Activated CD8-positive, alpha-beta memory T cell treated with anti-CD3 and anti-CD28 coated beads, Interleukin-2, amount 10 ng/mL, durations not matched to agents 7 days and 5 days (primary cell): ENCODE measurements at regions of chr16 and their contacts with region 1.

Region 1: DNA sequence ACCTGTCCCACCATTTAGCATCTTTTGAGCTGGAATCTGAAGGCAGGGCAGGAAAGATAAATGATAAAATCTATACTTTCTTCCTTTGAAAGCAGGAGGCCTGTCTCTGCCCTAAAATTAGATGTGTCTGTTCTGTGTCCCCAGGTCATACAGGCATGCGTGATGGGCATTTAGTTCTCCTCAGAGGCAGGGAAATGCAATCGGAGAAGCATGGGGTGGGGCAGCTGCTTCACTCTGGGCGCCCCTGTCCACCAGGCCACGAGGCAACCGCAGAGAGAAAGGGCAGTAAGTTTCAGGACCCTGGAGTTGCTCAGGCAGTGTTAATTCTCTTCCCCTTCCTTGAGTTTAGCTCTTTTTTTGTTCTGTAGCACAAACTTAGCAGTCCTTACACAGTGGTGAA is 25.1 kb downstream of the CLUAP1 start:
- DNase-seq: no peak
- ATAC-seq: no peak
- H3K4me3 Mint-ChIP-seq: no peak overlapping the region
- H3K27ac Mint-ChIP-seq: no peak overlapping the region
- H3K4me1 Mint-ChIP-seq: peaks cover 14% of the 10 kb centered on the region
- H3K27me3 Mint-ChIP-seq: no peaks in the 10 kb centered on the region

Region 2: DNA sequence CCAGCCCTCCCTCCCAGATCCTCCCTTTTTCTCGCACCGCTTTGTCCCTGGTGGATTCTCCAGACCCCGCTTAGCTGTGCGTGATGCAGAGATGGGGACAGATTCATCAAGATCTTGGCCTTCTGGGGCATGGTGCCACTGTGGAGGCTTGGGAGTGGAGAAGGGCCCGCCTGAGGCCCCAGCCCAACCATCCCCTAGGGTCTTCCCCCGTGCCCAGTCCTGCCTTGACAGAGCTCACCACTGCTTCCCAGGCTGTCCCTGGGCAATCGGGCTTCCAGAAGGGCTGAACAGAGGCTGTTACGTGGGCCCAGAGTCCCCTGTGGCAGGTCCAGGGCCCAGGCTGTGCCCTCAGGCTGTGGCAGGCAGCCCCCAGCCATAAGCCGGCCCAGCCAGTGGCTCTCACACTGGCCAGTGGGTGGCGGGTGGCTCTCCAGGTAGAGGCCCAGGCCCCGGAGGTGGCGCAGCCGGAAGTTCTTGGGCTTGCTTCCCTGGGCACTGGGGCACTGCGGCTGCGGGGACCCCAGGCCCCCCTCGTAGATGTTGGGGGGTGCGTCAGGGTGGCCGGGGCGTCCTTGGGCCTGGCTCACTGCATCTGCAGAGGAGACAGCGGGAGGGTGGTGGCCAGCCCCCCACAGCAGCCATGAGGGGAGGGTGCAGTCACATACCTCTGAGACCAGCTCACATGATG is 31.5 kb before region 1 on chr16:
- CTCF ChIA-PET with region 1: no interaction called
- DNase-seq: no peak
- ATAC-seq: no peak
- H3K4me3 Mint-ChIP-seq: no peak overlapping the region
- H3K27ac Mint-ChIP-seq: no peak overlapping the region
- H3K4me1 Mint-ChIP-seq: peaks cover under 1% of the 10 kb centered on the region
- H3K27me3 Mint-ChIP-seq: peaks cover under 1% of the 10 kb centered on the region

Region 3: GRCh38 chr16:3509470-3509928 is 16.5 kb before region 1 on chr16:
- CTCF ChIA-PET with region 1: interaction called, 13 read pairs
- DNase-seq: peak; percentile 93
- ATAC-seq: peak; percentile 96
- H3K4me3 Mint-ChIP-seq: peak overlapping the region; percentile 25
- H3K27ac Mint-ChIP-seq: peak overlapping the region; percentile 92
- H3K4me1 Mint-ChIP-seq: peaks cover 70% of the 10 kb centered on the region
- H3K27me3 Mint-ChIP-seq: no peaks in the 10 kb centered on the region

Region 4: GRCh38 chr16:3514621-3515020 is 11.3 kb before region 1 on chr16:
- CTCF ChIA-PET with region 1: interaction called, 13 read pairs
- DNase-seq: no peak
- ATAC-seq: no peak
- H3K4me3 Mint-ChIP-seq: no peak overlapping the region
- H3K27ac Mint-ChIP-seq: no peak overlapping the region
- H3K4me1 Mint-ChIP-seq: peaks cover 36% of the 10 kb centered on the region
- H3K27me3 Mint-ChIP-seq: no peaks in the 10 kb centered on the region

Region 5: GRCh38 chr16:3611146-3611975 is 85.4 kb after region 1 on chr16 and contains the start of gene SLX4:
- CTCF ChIA-PET with region 1: no interaction called
- DNase-seq: peak; percentile 93
- ATAC-seq: peak; percentile 92
- H3K4me3 Mint-ChIP-seq: peak within 1 kb of the TSS; percentile 97
- H3K27ac Mint-ChIP-seq: peak within 1 kb of the TSS; percentile 97
- H3K4me1 Mint-ChIP-seq: peaks cover 53% of the 10 kb centered on the region
- H3K27me3 Mint-ChIP-seq: no peaks in the 10 kb centered on the region
- total RNA-seq, gene SLX4: 19.0 to 24.6 TPM

Region 6: GRCh38 chr16:3637371-3637923 is 111.5 kb after region 1 on chr16:
- CTCF ChIA-PET with region 1: no interaction called
- DNase-seq: peak; percentile 51
- ATAC-seq: peak; percentile 61
- H3K4me3 Mint-ChIP-seq: no peak overlapping the region
- H3K27ac Mint-ChIP-seq: peak overlapping the region; percentile 32
- H3K4me1 Mint-ChIP-seq: peaks cover 17% of the 10 kb centered on the region
- H3K27me3 Mint-ChIP-seq: no peaks in the 10 kb centered on the region